Ascending aorta (tissue), 2 donors: ENCODE measurements at regions of chr7 and their contacts with region 1.

Region 1: GRCh38 chr7:92528188-92528957 is at the starts of genes PEX1 and RBM48:
- DNase-seq: peak; percentile 90 to 98
- H3K4me3 ChIP-seq: peak within 1 kb of the TSS; percentile 86 to 94
- H3K27ac ChIP-seq: peak within 1 kb of the TSS; percentile 88 to 89
- H3K4me1 ChIP-seq: peaks cover 9 to 18% of the 10 kb centered on the region in 2 donors
- H3K27me3 ChIP-seq: no peaks in the 10 kb centered on the region
- CTCF ChIP-seq: peak in 2 of 3 experiments; percentile 36 to 48
- total RNA-seq, gene PEX1: 6.5 TPM
- total RNA-seq, gene RBM48: 2.2 TPM

Region 2: DNA sequence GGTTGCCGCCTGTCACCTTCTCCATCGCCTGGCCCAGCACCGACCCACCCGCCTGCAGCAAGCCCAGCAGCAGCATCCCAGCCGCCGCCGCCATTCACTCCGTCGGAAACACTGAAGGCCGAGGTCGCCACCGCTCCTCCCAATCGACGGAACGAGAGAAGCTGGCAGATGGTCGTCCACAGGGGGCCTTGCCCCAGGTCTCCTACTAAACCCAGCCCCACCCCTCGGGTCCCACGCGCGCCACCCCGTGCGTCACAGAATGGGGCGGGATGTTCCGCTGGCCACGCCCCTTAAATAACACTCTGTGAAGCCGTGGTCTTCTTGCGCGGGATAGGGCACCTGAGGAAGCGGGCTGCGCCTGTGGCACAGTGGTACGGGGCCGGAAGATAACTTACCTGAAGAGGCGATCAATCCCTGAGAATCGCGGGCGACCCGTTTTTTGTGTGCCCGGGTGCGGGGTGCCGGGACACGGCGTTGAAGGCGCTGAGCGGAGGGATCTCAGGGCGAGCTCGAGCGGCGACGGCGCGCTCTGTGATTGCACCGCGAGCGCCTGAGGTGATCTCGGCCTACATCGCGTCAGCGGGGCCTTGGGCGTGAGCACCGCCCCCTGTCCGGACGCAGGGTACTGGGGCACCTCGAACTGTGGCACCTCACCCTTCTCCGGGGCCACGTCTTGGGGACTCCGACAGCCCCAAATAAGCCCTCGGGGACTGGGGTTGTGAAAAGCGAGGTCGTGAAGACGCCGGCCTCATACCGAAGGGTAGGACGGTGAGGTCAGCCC is 393.9 kb before region 1 on chr7 and contains the start of gene CYP51A1:
- intact Hi-C with region 1: loop called (anchors 2 kb)
- DNase-seq: peak; percentile 77 to 97
- H3K4me3 ChIP-seq: peak within 1 kb of the TSS; percentile 67 to 88
- H3K27ac ChIP-seq: peak within 1 kb of the TSS; percentile 92 to 93
- H3K4me1 ChIP-seq: peaks cover 0 to 10% of the 10 kb centered on the region in 2 donors
- H3K27me3 ChIP-seq: no peaks in the 10 kb centered on the region
- CTCF ChIP-seq: no peak
- total RNA-seq, gene CYP51A1: 19.9 TPM

Region 3: DNA sequence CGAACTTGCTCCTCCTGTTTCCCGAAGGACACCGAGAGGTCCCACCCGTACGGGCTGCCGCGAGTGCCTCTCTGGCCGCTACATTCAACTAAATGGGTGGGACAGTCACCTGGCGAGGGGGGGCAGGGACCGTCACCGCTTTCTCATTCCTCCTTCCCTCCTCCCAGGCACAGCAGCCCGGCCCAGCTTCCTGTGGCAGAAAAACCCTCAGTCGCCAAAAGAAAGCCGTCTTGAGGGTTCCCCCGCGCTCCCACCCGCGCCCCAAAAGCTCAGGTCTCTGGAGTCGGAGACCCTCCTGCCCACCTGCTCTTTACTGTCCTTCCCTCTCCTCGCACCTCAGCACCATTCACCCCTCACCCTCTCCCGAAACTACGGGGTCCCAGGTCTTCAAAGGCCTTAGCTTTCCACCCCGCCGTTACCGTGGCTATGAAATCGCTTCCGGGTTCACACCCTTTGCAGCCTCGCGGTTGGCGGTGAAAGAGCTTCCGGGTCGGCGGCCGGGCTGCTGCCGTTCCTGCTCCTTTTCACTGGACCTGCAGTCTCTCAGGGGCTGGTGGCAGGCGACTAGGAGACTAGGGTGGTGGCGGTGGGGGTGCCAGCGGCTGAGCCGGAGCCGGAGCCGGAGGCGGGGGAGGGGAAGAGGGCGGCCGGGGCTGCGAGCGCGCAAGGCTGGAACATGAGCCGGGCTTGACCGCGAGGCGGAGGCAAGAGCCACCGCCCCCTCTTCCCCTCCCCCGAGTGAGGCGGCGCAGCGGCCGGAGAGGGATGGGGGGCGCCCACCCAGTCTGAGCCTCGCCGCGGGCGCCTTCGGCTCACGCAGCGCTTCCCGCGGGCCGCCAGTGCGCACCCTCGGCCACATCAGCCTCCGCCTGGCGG is 282.6 kb before region 1 on chr7 and contains the starts of genes ANKIB1 and KRIT1:
- intact Hi-C with region 1: loop called (anchors 1 kb)
- DNase-seq: peak; percentile 36 to 94
- H3K4me3 ChIP-seq: peak within 1 kb of the TSS; percentile 80 to 99
- H3K27ac ChIP-seq: peak within 1 kb of the TSS; percentile 90 to 94
- H3K4me1 ChIP-seq: peaks cover 0 to 25% of the 10 kb centered on the region in 2 donors
- H3K27me3 ChIP-seq: no peaks in the 10 kb centered on the region
- CTCF ChIP-seq: peak in 2 of 3 experiments; percentile 4 to 14
- total RNA-seq, gene ANKIB1: 27.4 TPM
- total RNA-seq, gene KRIT1: 66.1 TPM

Region 4: DNA sequence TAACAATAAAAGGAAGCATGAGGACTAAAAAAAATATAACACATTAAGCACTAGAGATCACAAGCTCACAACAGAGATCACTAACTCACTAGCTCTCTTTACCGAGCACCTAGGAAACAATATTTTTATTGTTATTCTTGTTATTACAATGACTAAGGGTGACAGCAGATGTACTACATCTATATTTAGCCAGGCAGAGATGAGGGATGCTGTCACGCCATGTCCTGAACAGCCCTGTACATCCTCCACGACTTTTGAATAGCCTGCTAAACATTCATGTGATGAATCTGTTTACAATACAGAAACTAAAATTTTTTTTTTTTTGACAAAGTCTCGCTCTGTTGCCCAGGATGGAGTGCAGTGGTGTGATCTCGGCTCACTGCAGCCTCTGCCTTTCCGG is 39.1 kb after region 1 on chr7:
- intact Hi-C with region 1: no loop called
- DNase-seq: no peak
- H3K4me3 ChIP-seq: no peak overlapping the region
- H3K27ac ChIP-seq: no peak overlapping the region
- H3K4me1 ChIP-seq: no peaks in the 10 kb centered on the region
- H3K27me3 ChIP-seq: no peaks in the 10 kb centered on the region
- CTCF ChIP-seq: no peak

Region 5: DNA sequence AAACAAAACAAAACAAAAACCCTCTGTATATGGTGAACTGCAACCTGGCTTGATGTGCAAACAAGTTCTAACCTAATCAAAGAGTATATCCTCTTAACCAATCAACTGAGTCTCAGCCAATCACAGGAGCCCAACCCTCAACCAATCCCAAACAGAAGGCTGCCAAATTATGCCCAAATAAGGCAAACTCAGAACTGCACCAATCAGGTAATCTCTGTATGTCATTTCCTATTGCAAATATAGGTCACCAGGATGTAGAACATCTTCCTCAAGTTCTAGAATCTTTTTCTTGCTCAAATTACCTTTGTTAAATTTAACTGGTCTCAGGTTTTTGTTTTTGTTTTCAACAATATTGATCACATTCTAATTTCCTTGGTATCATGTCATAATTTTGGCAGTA is 56.6 kb after region 1 on chr7:
- intact Hi-C with region 1: loop called (anchors 5 kb)
- DNase-seq: no peak
- H3K4me3 ChIP-seq: no peak overlapping the region
- H3K27ac ChIP-seq: no peak overlapping the region
- H3K4me1 ChIP-seq: peaks cover 0 to 24% of the 10 kb centered on the region in 2 donors
- H3K27me3 ChIP-seq: no peaks in the 10 kb centered on the region
- CTCF ChIP-seq: no peak

Region 6: GRCh38 chr7:93055543-93056107 is 527.3 kb after region 1 on chr7:
- intact Hi-C with region 1: loop called (anchors 5 kb)
- DNase-seq: no peak
- H3K4me3 ChIP-seq: no peak overlapping the region
- H3K27ac ChIP-seq: no peak overlapping the region
- H3K4me1 ChIP-seq: no peaks in the 10 kb centered on the region
- H3K27me3 ChIP-seq: no peaks in the 10 kb centered on the region
- CTCF ChIP-seq: peak; percentile 66 to 79 (median 74)

Region 7: DNA sequence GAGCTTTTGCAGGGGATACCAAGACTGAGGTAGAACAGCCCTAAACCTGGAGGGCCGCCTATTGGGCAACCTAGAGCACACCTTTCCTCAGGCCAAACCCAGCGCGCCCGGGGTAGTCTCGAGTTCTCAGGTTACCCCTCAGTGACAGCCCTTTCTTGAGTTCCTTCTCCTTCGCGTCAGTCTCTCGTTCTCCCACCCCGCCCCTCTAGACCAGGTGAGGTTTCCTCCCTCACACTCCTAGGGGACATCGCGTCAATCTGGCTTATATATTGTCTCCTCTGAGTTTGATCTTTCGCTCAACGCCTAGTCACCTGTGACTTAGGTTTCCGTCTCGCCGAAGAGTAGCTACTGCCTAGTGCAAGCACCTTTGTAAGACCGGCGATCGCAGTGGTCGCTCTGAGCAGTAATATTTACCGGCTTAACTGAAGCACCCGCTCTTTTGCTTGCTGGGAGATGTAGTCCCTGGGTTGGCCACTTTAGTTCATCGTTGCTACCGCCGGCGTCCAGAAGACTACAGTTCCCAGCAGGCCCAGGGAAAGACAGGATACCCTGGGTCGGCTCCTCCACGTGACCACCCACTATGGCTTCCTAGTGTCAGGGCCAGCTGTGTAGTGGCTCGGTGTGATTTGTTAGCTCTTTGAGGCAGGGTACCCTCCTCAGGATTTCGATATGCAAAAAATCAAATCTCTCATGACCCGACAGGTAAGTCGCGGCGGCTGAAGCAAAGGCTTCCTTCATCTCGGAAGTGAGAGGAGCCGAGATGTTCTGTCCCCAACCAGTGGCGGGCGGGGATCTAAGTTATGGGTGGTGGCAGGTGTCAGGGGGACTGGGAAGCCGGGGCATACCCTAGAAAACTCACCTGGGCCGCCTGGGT is 703.7 kb after region 1 on chr7 and contains the start of gene VPS50:
- intact Hi-C with region 1: loop called (anchors 1 kb)
- DNase-seq: peak; percentile 86 to 98
- H3K4me3 ChIP-seq: peak within 1 kb of the TSS; percentile 90 to 91
- H3K27ac ChIP-seq: peak within 1 kb of the TSS in 1 of 2 donors; percentile 29
- H3K4me1 ChIP-seq: peaks cover 0 to 6% of the 10 kb centered on the region in 2 donors
- H3K27me3 ChIP-seq: no peaks in the 10 kb centered on the region
- CTCF ChIP-seq: no peak
- total RNA-seq, gene VPS50: 6.9 TPM